Tibial artery (tissue), 4 donors: ENCODE measurements at regions of chr14 and their contacts with region 1.

Region 1: GRCh38 chr14:69726761-69727511 is 40.0 kb upstream of the SRSF5 start:
- DNase-seq: peak; percentile 75 to 87
- H3K4me3 ChIP-seq: peak overlapping the region; percentile 41 to 50
- H3K27ac ChIP-seq: peak overlapping the region; percentile 36
- H3K4me1 ChIP-seq: peaks cover 0 to 9% (median 4%) of the 10 kb centered on the region in 4 donors
- H3K27me3 ChIP-seq: no peaks in the 10 kb centered on the region
- CTCF ChIP-seq: peak; percentile 98 to 99

Region 2: DNA sequence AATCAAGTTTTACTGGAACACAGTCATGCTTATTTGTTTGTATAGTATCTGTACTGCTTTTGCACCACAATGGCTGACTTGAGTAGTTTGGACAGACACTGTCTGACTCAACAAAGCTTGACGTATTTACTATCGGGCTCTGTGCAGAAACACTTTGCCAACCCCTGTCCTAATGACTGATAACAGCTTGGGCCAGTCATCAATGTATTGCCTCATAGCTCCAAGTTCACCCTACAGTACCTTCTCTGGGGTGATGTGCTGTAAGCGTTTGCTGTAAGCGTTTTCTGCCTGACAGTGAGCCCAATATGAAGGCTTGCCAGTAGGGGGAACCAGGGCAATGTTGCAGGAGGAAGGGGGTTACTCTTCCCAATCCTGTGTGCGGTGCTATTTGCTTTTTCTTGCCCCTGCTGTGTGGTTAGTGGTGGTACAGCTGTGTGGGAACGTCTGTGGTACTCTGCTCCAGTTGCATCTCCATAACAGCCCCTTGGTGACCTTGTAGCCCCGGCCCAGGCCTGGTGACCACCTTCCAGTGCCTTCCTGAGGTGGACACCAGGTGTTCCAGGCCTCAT is 146.8 kb before region 1 on chr14:
- intact Hi-C with region 1: loop called (anchors 5 kb)
- DNase-seq: no peak
- H3K4me3 ChIP-seq: no peak overlapping the region
- H3K27ac ChIP-seq: no peak overlapping the region
- H3K4me1 ChIP-seq: no peaks in the 10 kb centered on the region
- H3K27me3 ChIP-seq: peaks cover 0 to 26% of the 10 kb centered on the region in 2 donors
- CTCF ChIP-seq: no peak

Region 3: DNA sequence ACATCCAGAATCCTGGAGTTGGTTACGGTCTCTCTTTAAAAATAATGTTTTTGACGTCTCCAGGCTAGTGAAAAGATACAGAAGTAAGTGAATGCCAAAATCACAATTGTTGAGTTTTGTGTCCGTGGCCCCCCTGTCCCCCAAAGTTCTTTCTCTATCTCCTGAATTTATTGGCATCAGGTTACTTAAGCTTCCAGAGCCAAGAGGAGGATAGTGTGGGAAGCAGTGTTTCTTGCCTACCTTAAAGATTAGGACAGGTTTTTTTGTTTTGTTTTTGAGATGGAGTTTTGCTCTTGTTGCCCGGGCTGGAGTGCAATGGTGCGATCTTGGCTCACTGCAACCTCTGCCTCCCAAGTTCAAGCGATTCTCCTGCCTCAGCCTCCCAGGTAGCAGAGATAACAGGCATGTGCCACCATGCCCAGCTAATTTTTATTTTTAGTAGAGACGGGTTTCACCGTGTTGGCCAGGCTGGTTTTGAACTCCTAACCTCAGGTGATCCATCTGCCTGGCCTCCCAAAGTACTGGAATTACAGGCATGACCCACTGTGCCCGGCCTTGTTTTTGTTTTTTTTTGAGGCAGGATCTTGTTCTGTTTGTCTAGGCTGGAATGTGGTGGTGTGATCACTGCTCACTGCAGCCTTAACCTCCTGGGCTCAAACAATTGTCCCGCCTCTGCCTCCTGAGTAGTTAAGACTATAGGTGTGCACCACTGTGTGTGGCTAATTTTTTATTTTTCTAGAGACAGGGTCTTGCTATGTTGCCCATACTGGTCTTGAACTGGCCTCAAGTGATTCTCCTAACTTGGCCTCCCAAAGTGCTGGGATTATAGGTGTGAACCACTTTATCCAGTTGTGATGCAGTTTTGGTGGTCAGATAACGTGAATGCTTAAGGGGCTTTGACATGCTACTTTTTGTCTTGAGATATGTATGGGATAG is 45.4 kb after region 1 on chr14:
- intact Hi-C with region 1: no loop called
- DNase-seq: no peak
- H3K4me3 ChIP-seq: no peak overlapping the region
- H3K27ac ChIP-seq: no peak overlapping the region
- H3K4me1 ChIP-seq: peaks cover 0 to 70% (median 37%) of the 10 kb centered on the region in 4 donors
- H3K27me3 ChIP-seq: no peaks in the 10 kb centered on the region
- CTCF ChIP-seq: no peak